ENCODE measurements at regions of chr7 and their contacts with region 1.

Region 1: DNA sequence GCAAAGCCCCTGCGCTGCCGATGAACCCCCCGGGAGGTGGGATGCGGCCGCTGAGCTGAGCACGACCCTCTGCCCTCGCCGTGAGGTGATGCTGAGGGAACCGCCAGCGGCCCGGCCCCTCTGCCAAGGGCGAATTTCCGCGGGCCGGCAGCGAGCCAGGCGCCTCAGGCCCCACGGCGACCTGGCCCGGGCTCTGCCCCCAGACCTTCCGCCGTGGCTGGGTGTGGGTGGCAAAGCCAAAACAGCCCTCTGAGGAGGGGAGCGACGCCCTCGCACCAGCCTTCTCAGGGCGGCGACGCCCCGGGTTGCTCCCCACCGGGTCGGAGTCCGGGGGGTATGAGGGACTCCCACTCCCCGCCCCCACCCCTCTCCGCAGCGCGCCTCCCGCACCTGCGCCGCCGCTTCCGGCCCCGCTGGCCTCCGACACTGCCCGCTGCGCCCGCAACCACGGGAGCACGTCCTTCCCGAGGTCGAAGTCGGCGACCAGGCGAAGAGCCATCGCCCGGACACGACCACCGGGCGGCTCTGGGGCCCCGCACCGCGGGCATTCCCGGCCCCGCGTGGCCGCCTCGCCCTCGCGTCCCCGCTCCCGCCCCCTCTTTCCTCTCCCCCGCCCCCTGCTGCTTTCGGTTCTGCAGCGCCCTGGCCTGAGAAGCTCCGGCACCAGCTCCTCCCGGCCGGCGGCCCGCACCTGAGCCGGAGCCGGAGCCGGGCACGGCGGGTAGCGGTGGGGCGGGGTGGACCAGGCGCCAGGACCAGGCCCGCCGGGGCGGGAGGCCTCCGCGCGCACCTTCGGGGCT is at the start of gene GSAP:
- DNase-seq: no peak
- ATAC-seq: peak; percentile 71
- H3K4me3 ChIP-seq: peak within 1 kb of the TSS; percentile 74
- H3K27ac ChIP-seq: peak within 1 kb of the TSS; percentile 75
- H3K4me1 ChIP-seq: peaks cover 4% of the 10 kb centered on the region; the same call in 1 of the 2 replicates
- H3K27me3 ChIP-seq: no peaks in the 10 kb centered on the region
- CTCF ChIP-seq: no peak
- EP300 ChIP-seq: no peak
- POLR2A ChIP-seq: peak; percentile 84
- RAD21 ChIP-seq: no peak
- polyA plus RNA-seq, gene GSAP: 6.6 to 8.0 TPM

Region 2: GRCh38 chr7:77331938-77332695 is 83.9 kb before region 1 on chr7:
- CTCF ChIA-PET with region 1: interaction called, 7 read pairs
- POLR2A ChIA-PET with region 1: interaction called, 5 read pairs
- RAD21 ChIA-PET with region 1: interaction called, 23 read pairs
- SMC1A ChIA-PET with region 1: interaction called, 13 read pairs
- in situ Hi-C with region 1: no loop called
- intact Hi-C with region 1: no loop called
- DNase-seq: peak; percentile 95
- ATAC-seq: peak; percentile 84
- H3K4me3 ChIP-seq: no peak overlapping the region
- H3K27ac ChIP-seq: no peak overlapping the region
- H3K4me1 ChIP-seq: peaks cover 51% of the 10 kb centered on the region
- H3K27me3 ChIP-seq: no peaks in the 10 kb centered on the region
- CTCF ChIP-seq: peak; percentile 58 to 82 (median 69); a peak in 5 of 6 replicates
- EP300 ChIP-seq: no peak
- POLR2A ChIP-seq: no peak
- RAD21 ChIP-seq: peak; percentile 90

Region 3: GRCh38 chr7:77368974-77369373 is 47.0 kb before region 1 on chr7:
- CTCF ChIA-PET with region 1: no interaction called
- POLR2A ChIA-PET with region 1: no interaction called
- RAD21 ChIA-PET with region 1: no interaction called
- SMC1A ChIA-PET with region 1: interaction called, 10 read pairs
- in situ Hi-C with region 1: no loop called
- intact Hi-C with region 1: no loop called
- DNase-seq: no peak
- ATAC-seq: peak; percentile 49; the same call in 1 of the 3 replicates
- H3K4me3 ChIP-seq: no peak overlapping the region
- H3K27ac ChIP-seq: no peak overlapping the region
- H3K4me1 ChIP-seq: no peaks in the 10 kb centered on the region
- H3K27me3 ChIP-seq: no peaks in the 10 kb centered on the region
- CTCF ChIP-seq: peak; percentile 2 to 27 (median 8); a peak in 2 of 6 replicates
- EP300 ChIP-seq: no peak
- POLR2A ChIP-seq: no peak
- RAD21 ChIP-seq: peak; percentile 27; the same call in 1 of the 2 replicates

Region 4: DNA sequence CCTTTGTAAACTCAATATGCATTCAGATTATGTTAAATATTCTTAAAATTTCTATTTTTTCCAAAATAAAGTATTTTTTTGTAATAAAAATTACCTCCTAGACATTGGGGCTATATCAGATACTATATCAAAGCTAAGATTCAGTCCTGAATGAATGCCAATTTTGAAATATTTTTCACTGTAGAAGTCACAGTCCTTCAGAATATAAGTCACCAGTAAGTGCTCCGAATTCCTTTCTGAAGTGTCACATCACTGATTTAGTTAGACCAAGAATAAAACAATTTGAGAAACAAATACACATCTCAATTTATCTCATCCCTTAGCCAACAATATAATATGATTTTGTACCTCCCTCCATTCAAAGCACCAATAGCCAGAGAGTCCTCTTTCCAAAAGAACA is 34.0 kb after region 1 on chr7:
- CTCF ChIA-PET with region 1: interaction called, 4 read pairs
- POLR2A ChIA-PET with region 1: interaction called, 4 read pairs
- RAD21 ChIA-PET with region 1: no interaction called
- SMC1A ChIA-PET with region 1: interaction called, 16 read pairs
- in situ Hi-C with region 1: no loop called
- intact Hi-C with region 1: no loop called
- DNase-seq: no peak
- ATAC-seq: no peak
- H3K4me3 ChIP-seq: no peak overlapping the region
- H3K27ac ChIP-seq: no peak overlapping the region
- H3K4me1 ChIP-seq: 0 out of 2 replicates have a peak, but pooled peaks cover 3% of the 10 kb centered on the region
- H3K27me3 ChIP-seq: no peaks in the 10 kb centered on the region
- CTCF ChIP-seq: no peak
- EP300 ChIP-seq: no peak
- POLR2A ChIP-seq: no peak
- RAD21 ChIP-seq: no peak

Region 5: DNA sequence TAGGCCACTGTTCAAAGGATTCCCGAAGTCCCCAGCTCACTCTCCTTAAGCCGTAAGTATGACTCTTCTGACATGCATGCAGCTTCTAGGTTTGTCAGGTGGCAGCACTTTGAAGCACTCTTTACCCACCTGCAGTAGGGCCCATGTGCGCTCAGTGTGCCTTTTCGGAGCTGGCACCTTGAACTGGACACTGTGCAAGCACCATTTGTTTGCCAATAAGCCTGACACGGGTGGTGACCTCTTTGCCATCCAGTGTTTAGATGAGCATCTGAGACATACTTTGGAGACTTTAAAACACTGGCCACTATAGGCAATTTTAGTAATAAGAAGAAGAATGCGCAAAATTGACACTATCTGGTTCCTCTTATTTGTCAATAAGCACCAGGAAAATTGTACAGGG is 45.8 kb after region 1 on chr7:
- CTCF ChIA-PET with region 1: no interaction called
- POLR2A ChIA-PET with region 1: interaction called, 5 read pairs
- RAD21 ChIA-PET with region 1: interaction called, 10 read pairs
- SMC1A ChIA-PET with region 1: interaction called, 11 read pairs
- in situ Hi-C with region 1: no loop called
- intact Hi-C with region 1: loop called (anchors 5 kb)
- DNase-seq: no peak
- ATAC-seq: no peak
- H3K4me3 ChIP-seq: no peak overlapping the region
- H3K27ac ChIP-seq: no peak overlapping the region
- H3K4me1 ChIP-seq: peaks cover 23% of the 10 kb centered on the region
- H3K27me3 ChIP-seq: no peaks in the 10 kb centered on the region
- CTCF ChIP-seq: no peak
- EP300 ChIP-seq: no peak
- POLR2A ChIP-seq: no peak
- RAD21 ChIP-seq: no peak

Region 6: DNA sequence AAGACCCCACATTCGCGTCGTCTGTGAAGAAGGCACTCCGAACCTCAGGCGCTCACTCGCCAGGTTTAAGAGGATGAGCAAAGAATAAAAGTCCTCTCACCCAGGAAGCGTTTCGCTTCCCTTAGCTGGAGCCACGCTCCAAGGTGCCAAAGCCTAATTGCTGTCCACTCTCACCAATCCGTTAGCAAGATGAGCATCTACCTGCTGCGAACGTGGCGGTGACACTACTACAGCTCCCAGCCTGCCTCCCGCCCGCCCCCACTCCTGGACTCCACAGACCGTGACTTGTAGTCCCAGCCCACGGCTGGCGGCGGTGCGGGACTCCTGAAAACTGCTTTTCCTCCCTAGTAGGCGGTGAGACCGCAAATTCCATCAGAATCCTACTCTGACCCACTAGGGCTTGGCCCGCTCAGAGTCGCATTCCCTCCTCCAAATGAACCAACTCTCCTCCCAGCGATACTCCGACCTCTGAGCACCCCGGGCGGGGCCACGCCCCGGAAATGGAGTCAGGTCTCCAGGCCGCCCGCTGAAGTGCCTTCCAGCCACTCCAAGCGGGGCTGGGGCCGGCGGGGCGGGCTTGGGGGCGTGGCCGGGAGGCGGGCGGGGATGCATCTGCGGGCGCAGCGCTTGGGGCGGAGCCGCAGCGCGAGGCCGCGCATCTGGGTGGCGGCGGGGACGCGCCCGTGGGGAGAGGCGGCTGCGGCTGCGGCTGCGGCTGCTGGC is 120.6 kb after region 1 on chr7:
- CTCF ChIA-PET with region 1: interaction called, 4 read pairs
- POLR2A ChIA-PET with region 1: interaction called, 5 read pairs
- RAD21 ChIA-PET with region 1: interaction called, 29 read pairs
- SMC1A ChIA-PET with region 1: interaction called, 6 read pairs
- in situ Hi-C with region 1: no loop called
- intact Hi-C with region 1: loop called (anchors 2 kb)
- DNase-seq: peak; percentile 74
- ATAC-seq: peak; percentile 92
- H3K4me3 ChIP-seq: peak overlapping the region; percentile 77
- H3K27ac ChIP-seq: peak overlapping the region; percentile 78
- H3K4me1 ChIP-seq: peaks cover 3% of the 10 kb centered on the region; the same call in 1 of the 2 replicates
- H3K27me3 ChIP-seq: no peaks in the 10 kb centered on the region
- CTCF ChIP-seq: no peak
- EP300 ChIP-seq: no peak
- POLR2A ChIP-seq: peak; percentile 92
- RAD21 ChIP-seq: no peak

Measured in GM12878 (cell line).